ENCODE measurements at regions of chr4 and their contacts with region 1.

Region 1: GRCh38 chr4:153466081-153466948 is at the start of gene TMEM131L:
- DNase-seq: peak; percentile 88
- H3K4me3 ChIP-seq: peak within 1 kb of the TSS; percentile 87
- H3K27ac ChIP-seq: peak within 1 kb of the TSS; percentile 95
- H3K4me1 ChIP-seq: peaks cover 47% of the 10 kb centered on the region
- CTCF ChIP-seq: peak; percentile 37; the same call in 1 of the 2 replicates
- total RNA-seq, gene TMEM131L: 98.7 and 148 TPM in 2 replicates

Region 2: DNA sequence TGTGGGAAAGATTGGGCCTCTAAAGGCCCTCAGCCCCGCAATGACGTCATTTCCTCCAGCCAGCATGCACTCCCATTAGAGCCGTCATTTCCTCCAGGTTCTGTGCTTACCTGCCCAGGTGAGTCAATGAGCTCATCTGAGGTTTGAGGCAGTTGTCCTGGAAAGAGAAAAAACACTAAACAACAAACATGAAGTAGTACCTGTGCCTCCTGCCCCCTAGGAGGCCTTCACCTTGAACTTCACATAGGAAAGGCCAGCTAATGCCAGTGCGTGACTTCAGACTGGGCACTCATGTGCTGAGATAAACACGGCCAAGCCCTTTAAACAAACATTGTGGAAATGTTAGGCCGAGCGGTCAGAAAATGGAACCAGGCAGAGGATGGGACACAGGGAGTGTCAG is 474.3 kb before region 1 on chr4:
- CTCF ChIA-PET with region 1: no interaction called
- POLR2A ChIA-PET with region 1: no interaction called
- intact Hi-C with region 1: no loop called
- DNase-seq: no peak
- H3K4me3 ChIP-seq: no peak overlapping the region
- H3K27ac ChIP-seq: no peak overlapping the region
- H3K4me1 ChIP-seq: no peaks in the 10 kb centered on the region
- CTCF ChIP-seq: no peak

Region 3: GRCh38 chr4:153426207-153426885 is 40.0 kb before region 1 on chr4:
- CTCF ChIA-PET with region 1: interaction called, 3 read pairs
- POLR2A ChIA-PET with region 1: interaction called, 60 read pairs
- intact Hi-C with region 1: no loop called
- DNase-seq: peak; percentile 90
- H3K4me3 ChIP-seq: peak overlapping the region; percentile 37
- H3K27ac ChIP-seq: peak overlapping the region; percentile 94
- H3K4me1 ChIP-seq: peaks cover 75% of the 10 kb centered on the region
- CTCF ChIP-seq: no peak

Region 4: DNA sequence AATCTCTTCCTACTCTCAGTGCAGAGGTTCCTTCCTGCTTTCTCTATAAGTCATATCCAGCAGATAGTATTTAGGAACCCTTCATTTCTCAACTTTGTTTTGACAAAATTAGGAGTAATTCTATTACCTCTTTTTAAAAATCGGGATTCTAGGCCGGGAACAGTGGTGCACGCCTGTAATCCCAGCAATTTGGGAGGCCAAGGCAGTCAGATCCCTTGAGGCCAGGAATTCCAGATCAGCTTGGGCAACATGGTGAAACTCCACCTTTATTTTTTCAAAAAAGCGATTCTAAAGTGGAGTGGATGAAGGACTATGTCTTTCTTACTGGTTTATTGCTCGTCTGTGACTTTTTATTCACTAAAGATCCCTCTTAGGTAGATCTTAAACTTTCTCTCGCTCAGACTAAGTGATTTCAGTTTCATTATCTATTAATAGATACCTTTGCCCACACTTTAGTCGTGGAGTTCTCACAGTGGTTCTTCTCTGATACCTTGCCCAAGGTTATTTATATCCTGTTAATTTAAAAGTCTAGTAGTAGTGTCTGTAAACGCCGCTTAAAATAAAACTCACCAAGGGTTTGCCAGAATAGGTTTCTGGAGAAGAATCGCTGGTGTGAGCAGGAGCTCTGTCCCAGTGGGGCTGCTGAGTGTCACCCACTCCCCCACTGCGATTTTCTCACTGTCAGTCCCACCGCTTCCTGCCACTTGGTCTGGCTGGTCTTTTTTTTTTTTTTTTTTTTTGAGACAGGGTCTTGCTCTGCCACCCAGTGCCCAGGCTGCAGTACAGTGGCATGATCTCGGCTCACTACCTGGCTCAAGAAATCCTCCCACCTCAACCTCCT is 27.2 kb before region 1 on chr4:
- CTCF ChIA-PET with region 1: interaction called, 3 read pairs
- POLR2A ChIA-PET with region 1: interaction called, 60 read pairs
- intact Hi-C with region 1: loop called (anchors 1 kb)
- DNase-seq: peak; percentile 81
- H3K4me3 ChIP-seq: peak overlapping the region; percentile 67
- H3K27ac ChIP-seq: peak overlapping the region; percentile 94
- H3K4me1 ChIP-seq: peaks cover 94% of the 10 kb centered on the region
- CTCF ChIP-seq: peak; percentile 49

Region 5: GRCh38 chr4:153488006-153488891 is 21.9 kb after region 1 on chr4:
- CTCF ChIA-PET with region 1: no interaction called
- POLR2A ChIA-PET with region 1: interaction called, 50 read pairs
- intact Hi-C with region 1: no loop called
- DNase-seq: no peak
- H3K4me3 ChIP-seq: peak overlapping the region; percentile 32
- H3K27ac ChIP-seq: peak overlapping the region; percentile 49
- H3K4me1 ChIP-seq: peaks cover 90% of the 10 kb centered on the region
- CTCF ChIP-seq: no peak

Region 6: GRCh38 chr4:153528705-153529485 is 62.6 kb after region 1 on chr4:
- CTCF ChIA-PET with region 1: no interaction called
- POLR2A ChIA-PET with region 1: interaction called, 5 read pairs
- intact Hi-C with region 1: loop called (anchors 2 kb)
- DNase-seq: no peak
- H3K4me3 ChIP-seq: peak overlapping the region; percentile 15
- H3K27ac ChIP-seq: peak overlapping the region; percentile 49
- H3K4me1 ChIP-seq: peaks cover 76% of the 10 kb centered on the region
- CTCF ChIP-seq: no peak

Region 7: DNA sequence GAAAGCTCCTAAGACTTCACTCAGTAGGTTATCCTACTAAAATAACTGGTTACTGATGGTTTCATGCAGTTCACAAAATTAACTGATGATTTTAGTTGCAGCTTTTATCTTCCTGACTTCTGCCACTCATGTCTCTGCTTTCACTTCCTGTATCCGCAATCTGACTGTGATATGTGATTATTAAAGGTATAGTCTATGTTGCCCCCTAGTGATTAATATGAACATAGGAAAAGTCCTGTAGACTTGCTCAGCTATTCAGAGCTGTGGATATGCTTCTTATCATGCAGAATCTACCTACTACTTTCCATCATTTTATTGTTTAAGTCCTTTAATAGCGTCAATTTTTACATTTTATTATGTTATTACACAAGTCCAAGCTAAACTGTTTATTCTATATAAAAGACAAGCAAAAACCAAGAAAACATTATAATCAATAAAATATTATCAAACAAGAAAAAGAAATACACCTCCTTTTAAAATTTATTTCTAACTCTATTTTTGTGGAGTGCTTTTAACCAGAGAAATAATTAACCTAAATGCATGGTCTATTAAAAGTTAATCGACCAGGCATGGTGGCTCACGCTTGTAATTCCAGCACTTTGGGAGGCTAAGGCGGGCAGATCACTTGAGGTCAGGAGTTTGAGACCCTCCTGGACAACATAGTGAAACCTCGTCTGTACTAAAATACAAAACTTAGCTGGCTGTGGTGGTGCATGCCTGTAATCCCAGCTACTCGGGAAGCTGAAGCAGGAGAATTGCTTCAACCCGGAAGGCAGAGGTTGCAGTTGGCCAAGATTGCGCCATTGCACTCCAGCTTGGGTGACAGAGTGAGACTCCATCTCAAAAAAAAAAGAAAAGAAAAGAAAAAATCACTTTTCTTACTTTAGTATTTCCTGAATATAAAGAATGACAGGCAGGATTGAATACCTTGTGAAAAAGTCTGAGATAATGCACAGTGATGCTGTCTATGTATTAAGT is 177.4 kb after region 1 on chr4:
- CTCF ChIA-PET with region 1: no interaction called
- POLR2A ChIA-PET with region 1: interaction called, 4 read pairs
- intact Hi-C with region 1: loop called (anchors 1 kb)
- DNase-seq: peak; percentile 92
- H3K4me3 ChIP-seq: no peak overlapping the region
- H3K27ac ChIP-seq: peak overlapping the region; percentile 50
- H3K4me1 ChIP-seq: peaks cover 33% of the 10 kb centered on the region
- CTCF ChIP-seq: peak; percentile 89